ENCODE measurements at regions of chr17 and their contacts with region 1.

Region 1: GRCh38 chr17:75515496-75516254 is at the start of gene CASKIN2:
- DNase-seq: peak; percentile 93
- CTCF ChIP-seq: peak; percentile 93

Region 2: DNA sequence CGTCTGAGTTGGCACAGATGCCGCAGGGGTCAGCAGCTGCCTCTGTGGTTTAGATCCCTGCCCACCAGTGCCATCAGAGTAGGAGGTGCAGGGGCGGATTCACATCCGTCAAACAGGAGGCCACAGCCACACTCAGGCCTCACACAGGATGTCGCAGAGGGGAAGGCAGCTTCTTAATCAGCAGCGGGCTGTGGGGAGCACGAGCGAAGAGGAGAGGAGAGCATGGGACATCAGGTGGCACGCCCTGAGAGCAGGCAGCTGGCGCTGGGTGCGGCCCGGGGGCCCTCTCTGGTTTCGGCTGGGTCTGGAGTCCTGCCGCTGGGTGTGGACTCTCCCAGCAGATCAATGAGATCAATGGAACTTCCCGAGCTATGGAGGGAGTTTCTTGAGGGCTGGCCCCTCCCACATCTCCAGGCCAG is 19.5 kb after region 1 on chr17:
- CTCF ChIA-PET with region 1: interaction called, 15 read pairs
- POLR2A ChIA-PET with region 1: no interaction called
- DNase-seq: no peak
- CTCF ChIP-seq: no peak

Measured in GM10248 (cell line).